ENCODE measurements at regions of chr3 and their contacts with region 1.

Region 1: GRCh38 chr3:48439820-48440589 is at the starts of genes CCDC51 and TMA7:
- DNase-seq: peak; percentile 93
- ATAC-seq: peak; percentile 96
- H3K4me3 ChIP-seq: peak within 1 kb of the TSS; percentile 89
- H3K27ac ChIP-seq: peak within 1 kb of the TSS; percentile 86
- H3K4me1 ChIP-seq: peaks cover 19% of the 10 kb centered on the region
- H3K27me3 ChIP-seq: no peaks in the 10 kb centered on the region
- CTCF ChIP-seq: 0 out of 6 replicates have a peak, but pooled peaks of 1 of the 3 experiments have one; percentile 5
- EP300 ChIP-seq: no peak
- POLR2A ChIP-seq: peak; percentile 97
- RAD21 ChIP-seq: no peak
- polyA plus RNA-seq, gene CCDC51: 10.6 to 12.6 TPM
- polyA plus RNA-seq, gene TMA7: 1,729 to 1,760 TPM

Region 2: DNA sequence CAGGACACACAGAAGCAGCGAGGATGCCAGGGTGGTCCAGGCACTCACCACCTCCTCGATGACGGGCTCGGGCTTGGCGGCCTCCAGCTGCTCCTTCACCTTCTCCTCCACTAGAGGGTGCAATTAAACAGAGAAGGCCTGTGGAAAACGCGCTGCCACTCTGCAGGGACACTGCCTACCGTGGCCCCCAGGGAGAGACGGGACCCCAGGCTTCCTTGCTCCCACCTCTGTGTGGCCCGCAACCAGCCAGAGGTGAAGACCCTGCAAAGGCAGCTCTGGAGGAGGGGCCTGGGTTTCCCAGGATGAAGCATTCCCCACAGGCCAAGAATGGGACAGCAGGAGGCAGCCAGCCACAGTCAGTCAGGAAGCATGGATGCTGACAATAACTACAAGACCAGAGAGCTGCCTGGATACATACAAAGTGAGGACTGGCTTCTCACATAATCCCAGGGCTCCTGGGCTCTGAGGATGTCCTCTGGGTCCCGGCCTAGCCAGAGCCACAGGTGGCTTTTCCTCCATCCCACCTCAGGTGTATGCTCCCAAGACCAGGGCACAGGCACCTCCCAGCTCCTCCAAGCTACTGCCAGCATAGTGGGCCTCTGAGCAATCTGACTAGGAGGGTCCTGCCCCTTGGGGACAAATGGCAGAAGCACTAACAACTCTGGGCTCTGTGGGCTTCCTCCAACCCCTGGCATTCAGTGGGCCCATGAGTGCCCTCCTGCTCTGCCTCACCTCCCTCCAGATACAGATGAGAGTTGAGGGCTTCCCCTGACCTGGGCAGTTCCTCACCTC is 1516.2 kb before region 1 on chr3:
- CTCF ChIA-PET with region 1: no interaction called
- POLR2A ChIA-PET with region 1: no interaction called
- RAD21 ChIA-PET with region 1: no interaction called
- SMC1A ChIA-PET with region 1: no interaction called
- in situ Hi-C with region 1: no loop called
- intact Hi-C with region 1: no loop called
- DNase-seq: no peak
- ATAC-seq: no peak
- H3K4me3 ChIP-seq: no peak overlapping the region
- H3K27ac ChIP-seq: no peak overlapping the region
- H3K4me1 ChIP-seq: peaks cover 39% of the 10 kb centered on the region
- H3K27me3 ChIP-seq: no peaks in the 10 kb centered on the region
- CTCF ChIP-seq: peak; percentile 35 to 37 (median 37); a peak in 5 of 6 replicates
- EP300 ChIP-seq: no peak
- POLR2A ChIP-seq: no peak
- RAD21 ChIP-seq: peak; percentile 67

Region 3: GRCh38 chr3:48222616-48223513 is 217.1 kb before region 1 on chr3 and contains the start of gene CAMP:
- CTCF ChIA-PET with region 1: interaction called, 267 read pairs
- POLR2A ChIA-PET with region 1: no interaction called
- RAD21 ChIA-PET with region 1: interaction called, 10 read pairs
- SMC1A ChIA-PET with region 1: interaction called, 15 read pairs
- in situ Hi-C with region 1: no loop called
- intact Hi-C with region 1: no loop called
- DNase-seq: peak; percentile 84
- ATAC-seq: peak; percentile 81
- H3K4me3 ChIP-seq: no peak within 1 kb of the TSS
- H3K27ac ChIP-seq: peak within 1 kb of the TSS; percentile 71
- H3K4me1 ChIP-seq: peaks cover 61% of the 10 kb centered on the region
- H3K27me3 ChIP-seq: no peaks in the 10 kb centered on the region
- CTCF ChIP-seq: no peak
- EP300 ChIP-seq: no peak
- POLR2A ChIP-seq: peak; percentile 22; the same call in 1 of the 2 replicates
- RAD21 ChIP-seq: no peak
- polyA plus RNA-seq, gene CAMP: 25.4 to 34.3 TPM

Region 4: GRCh38 chr3:48256557-48256956 is 183.4 kb before region 1 on chr3:
- CTCF ChIA-PET with region 1: interaction called, 17 read pairs
- POLR2A ChIA-PET with region 1: no interaction called
- RAD21 ChIA-PET with region 1: no interaction called
- SMC1A ChIA-PET with region 1: interaction called, 12 read pairs
- in situ Hi-C with region 1: no loop called
- intact Hi-C with region 1: no loop called
- DNase-seq: no peak
- ATAC-seq: no peak
- H3K4me3 ChIP-seq: no peak overlapping the region
- H3K27ac ChIP-seq: no peak overlapping the region
- H3K4me1 ChIP-seq: no peaks in the 10 kb centered on the region
- H3K27me3 ChIP-seq: no peaks in the 10 kb centered on the region
- CTCF ChIP-seq: no peak
- EP300 ChIP-seq: no peak
- POLR2A ChIP-seq: no peak
- RAD21 ChIP-seq: no peak

Region 5: DNA sequence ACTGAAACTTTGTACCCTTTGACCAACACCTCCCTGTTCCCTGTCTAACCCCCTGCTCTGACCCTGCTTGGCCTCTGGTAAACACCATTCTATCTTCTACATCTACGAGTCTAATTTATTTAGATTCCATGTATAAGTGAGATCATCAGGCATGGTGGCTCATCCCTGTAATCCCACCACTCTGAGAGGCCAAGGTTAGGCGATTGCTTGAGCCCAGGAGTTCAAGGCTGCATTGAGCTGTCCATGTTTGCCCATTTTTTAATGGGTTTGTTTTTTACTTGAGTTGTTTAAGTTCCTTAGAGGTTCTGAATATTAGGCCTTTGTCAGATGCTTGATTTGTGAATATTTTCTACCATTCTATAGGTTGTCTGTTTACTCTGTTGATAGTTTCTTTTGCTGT is 51.0 kb before region 1 on chr3:
- CTCF ChIA-PET with region 1: interaction called, 20 read pairs
- POLR2A ChIA-PET with region 1: no interaction called
- RAD21 ChIA-PET with region 1: interaction called, 11 read pairs
- SMC1A ChIA-PET with region 1: interaction called, 12 read pairs
- in situ Hi-C with region 1: no loop called
- intact Hi-C with region 1: no loop called
- DNase-seq: no peak
- ATAC-seq: no peak
- H3K4me3 ChIP-seq: no peak overlapping the region
- H3K27ac ChIP-seq: no peak overlapping the region
- H3K4me1 ChIP-seq: no peaks in the 10 kb centered on the region
- H3K27me3 ChIP-seq: no peaks in the 10 kb centered on the region
- CTCF ChIP-seq: no peak
- EP300 ChIP-seq: no peak
- POLR2A ChIP-seq: no peak
- RAD21 ChIP-seq: no peak

Region 6: DNA sequence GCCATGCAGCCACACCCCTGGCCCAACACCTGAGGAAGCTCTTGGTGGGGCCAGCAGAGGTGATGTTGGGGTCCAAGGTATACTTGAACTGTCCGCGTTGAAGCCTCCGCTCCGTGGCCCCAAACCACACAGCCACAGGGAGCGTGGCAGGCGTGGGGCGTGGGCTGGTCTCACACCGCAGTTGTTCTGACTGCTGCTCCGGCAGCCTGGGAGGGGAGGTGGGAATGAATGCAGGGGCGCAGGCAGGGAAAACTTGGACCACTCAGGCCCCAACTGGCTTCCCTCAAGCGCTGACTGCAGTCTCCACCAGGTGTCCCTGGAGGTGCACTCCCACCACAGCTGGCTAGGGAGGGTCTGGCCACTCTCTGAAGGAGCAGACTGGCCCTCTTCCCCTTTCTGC is 24.5 kb before region 1 on chr3:
- CTCF ChIA-PET with region 1: interaction called, 757 read pairs
- POLR2A ChIA-PET with region 1: no interaction called
- RAD21 ChIA-PET with region 1: interaction called, 15 read pairs
- SMC1A ChIA-PET with region 1: interaction called, 8 read pairs
- in situ Hi-C with region 1: no loop called
- intact Hi-C with region 1: no loop called
- DNase-seq: no peak
- ATAC-seq: peak; percentile 42; the same call in 2 of the 3 replicates
- H3K4me3 ChIP-seq: no peak overlapping the region
- H3K27ac ChIP-seq: no peak overlapping the region
- H3K4me1 ChIP-seq: no peaks in the 10 kb centered on the region
- H3K27me3 ChIP-seq: no peaks in the 10 kb centered on the region
- CTCF ChIP-seq: no peak; a peak in 1 of 6 replicates
- EP300 ChIP-seq: no peak
- POLR2A ChIP-seq: no peak
- RAD21 ChIP-seq: no peak

Region 7: DNA sequence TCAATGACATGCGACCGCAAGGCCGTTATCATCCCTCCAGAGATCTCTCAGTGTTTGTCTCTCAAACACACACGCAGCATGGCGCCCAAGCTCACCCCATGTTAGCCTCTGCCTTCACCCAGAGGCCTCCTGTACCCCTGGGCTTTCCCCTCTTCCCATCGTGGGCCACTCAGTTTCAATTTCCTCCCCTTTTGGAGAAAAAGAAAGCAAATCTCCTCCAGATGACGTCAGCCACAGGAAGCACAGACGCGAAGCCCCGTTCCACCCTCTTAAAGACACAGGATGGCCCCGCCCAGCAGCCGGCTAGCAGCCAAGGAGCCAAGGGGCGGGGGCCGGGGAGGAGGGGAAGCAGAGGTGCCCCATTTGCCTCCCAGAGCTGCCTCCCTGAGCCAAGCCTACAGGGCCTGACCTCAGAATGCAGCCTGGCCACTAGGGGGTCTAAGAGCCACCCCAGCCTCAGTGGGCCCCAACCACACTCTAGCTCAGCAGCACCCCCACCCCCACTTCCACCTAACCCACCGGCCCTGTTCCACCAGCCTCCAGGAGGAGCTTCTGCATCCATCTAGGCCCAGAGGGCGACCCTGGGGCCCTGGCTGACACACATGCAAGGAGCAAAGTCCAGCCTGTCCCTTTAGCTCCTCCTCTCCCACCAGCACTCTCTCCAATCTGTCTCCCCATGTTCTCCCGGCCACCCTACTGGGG is 33.1 kb after region 1 on chr3:
- CTCF ChIA-PET with region 1: interaction called, 37 read pairs
- POLR2A ChIA-PET with region 1: interaction called, 8 read pairs
- RAD21 ChIA-PET with region 1: interaction called, 14 read pairs
- SMC1A ChIA-PET with region 1: interaction called, 18 read pairs
- in situ Hi-C with region 1: no loop called
- intact Hi-C with region 1: no loop called
- DNase-seq: peak; percentile 96
- ATAC-seq: peak; percentile 91
- H3K4me3 ChIP-seq: peak overlapping the region; percentile 71
- H3K27ac ChIP-seq: peak overlapping the region; percentile 100
- H3K4me1 ChIP-seq: peaks cover 31% of the 10 kb centered on the region
- H3K27me3 ChIP-seq: no peaks in the 10 kb centered on the region
- CTCF ChIP-seq: peak; percentile 35 to 55 (median 54); a peak in 5 of 6 replicates
- EP300 ChIP-seq: peak; percentile 59 to 64; a peak in 2 of 4 replicates
- POLR2A ChIP-seq: peak; percentile 88
- RAD21 ChIP-seq: no peak

Region 8: GRCh38 chr3:48635222-48636021 is 195.4 kb after region 1 on chr3 and contains the start of gene SLC26A6:
- CTCF ChIA-PET with region 1: interaction called, 26 read pairs
- POLR2A ChIA-PET with region 1: no interaction called
- RAD21 ChIA-PET with region 1: interaction called, 6 read pairs
- SMC1A ChIA-PET with region 1: interaction called, 5 read pairs
- in situ Hi-C with region 1: no loop called
- intact Hi-C with region 1: no loop called
- DNase-seq: peak; percentile 77
- ATAC-seq: peak; percentile 96
- H3K4me3 ChIP-seq: peak within 1 kb of the TSS; percentile 77
- H3K27ac ChIP-seq: peak within 1 kb of the TSS; percentile 57
- H3K4me1 ChIP-seq: peaks cover 11% of the 10 kb centered on the region; the same call in 1 of the 2 replicates
- H3K27me3 ChIP-seq: no peaks in the 10 kb centered on the region
- CTCF ChIP-seq: peak; percentile 52 to 81 (median 78)
- EP300 ChIP-seq: no peak
- POLR2A ChIP-seq: peak; percentile 77
- RAD21 ChIP-seq: peak; percentile 43
- polyA plus RNA-seq, gene SLC26A6: 2.1 to 2.9 TPM

Measured in GM12878 (cell line).